ENCODE measurements at regions of chr2 and their contacts with region 1.

Region 1: DNA sequence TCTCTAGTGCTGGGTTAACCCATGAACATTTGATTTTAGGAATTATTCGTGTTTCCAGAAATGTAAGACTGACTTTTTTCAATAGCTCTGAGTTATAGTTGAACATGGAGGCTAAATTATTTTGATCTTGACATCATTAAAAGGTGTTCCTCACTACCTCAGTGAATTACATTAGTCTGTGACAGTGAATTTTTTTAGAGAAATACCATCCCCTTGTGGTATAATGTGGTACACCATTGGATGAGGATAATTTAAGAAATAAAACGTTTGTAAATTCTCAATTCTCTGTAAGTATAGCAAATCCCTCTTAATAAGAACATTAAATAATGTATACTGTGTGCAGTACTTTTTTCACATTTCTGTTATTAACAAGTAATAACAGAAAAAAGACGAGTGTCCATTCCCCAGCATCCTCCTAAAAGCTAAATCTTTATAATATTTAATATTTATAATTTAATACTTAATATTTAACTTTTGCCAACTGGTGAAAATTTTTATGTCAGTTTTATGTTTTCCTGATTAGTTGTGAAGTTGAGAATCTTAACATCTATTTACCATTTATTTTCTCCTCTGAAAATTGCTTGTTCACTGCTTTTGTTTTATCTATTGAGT is 70.3 kb upstream of the CWC22 start:
- DNase-seq: no peak
- ATAC-seq: peak; percentile 45; the same call in 1 of the 3 replicates
- H3K4me3 ChIP-seq: no peak overlapping the region
- H3K27ac ChIP-seq: no peak overlapping the region
- H3K4me1 ChIP-seq: no peaks in the 10 kb centered on the region
- H3K27me3 ChIP-seq: no peaks in the 10 kb centered on the region
- CTCF ChIP-seq: peak; percentile 52 to 55 (median 54); a peak in 5 of 6 replicates
- EP300 ChIP-seq: no peak
- POLR2A ChIP-seq: no peak
- RAD21 ChIP-seq: peak; percentile 72

Region 2: GRCh38 chr2:179842498-179843153 is 234.8 kb before region 1 on chr2:
- CTCF ChIA-PET with region 1: no interaction called
- POLR2A ChIA-PET with region 1: no interaction called
- RAD21 ChIA-PET with region 1: no interaction called
- SMC1A ChIA-PET with region 1: no interaction called
- in situ Hi-C with region 1: no loop called
- intact Hi-C with region 1: loop called (anchors 5 kb)
- DNase-seq: no peak
- ATAC-seq: peak; percentile 75
- H3K4me3 ChIP-seq: no peak overlapping the region
- H3K27ac ChIP-seq: no peak overlapping the region
- H3K4me1 ChIP-seq: no peaks in the 10 kb centered on the region
- H3K27me3 ChIP-seq: no peaks in the 10 kb centered on the region; a peak in 2 of 4 replicates
- CTCF ChIP-seq: peak; percentile 33 to 42 (median 39); a peak in 4 of 6 replicates
- EP300 ChIP-seq: no peak
- POLR2A ChIP-seq: no peak
- RAD21 ChIP-seq: peak; percentile 64